Activated naive CD4-positive, alpha-beta T cell treated with anti-CD3 and anti-CD28 coated beads for 36 hours (primary cell): ENCODE measurements at regions of chr7 and their contacts with region 1.

Region 1: GRCh38 chr7:56074371-56074791 is 10.3 kb downstream of the SUMF2 start:
- DNase-seq: peak; percentile 72
- H3K4me3 Mint-ChIP-seq: no peak overlapping the region
- H3K27ac Mint-ChIP-seq: peak overlapping the region; percentile 3
- H3K4me1 Mint-ChIP-seq: peaks cover 6% of the 10 kb centered on the region
- H3K27me3 Mint-ChIP-seq: no peaks in the 10 kb centered on the region

Region 2: GRCh38 chr7:56007167-56007652 is 67.2 kb before region 1 on chr7:
- CTCF ChIA-PET with region 1: interaction called, 19 read pairs
- intact Hi-C with region 1: loop called (anchors 1 kb)
- DNase-seq: no peak
- H3K4me3 Mint-ChIP-seq: no peak overlapping the region
- H3K27ac Mint-ChIP-seq: no peak overlapping the region
- H3K4me1 Mint-ChIP-seq: no peaks in the 10 kb centered on the region
- H3K27me3 Mint-ChIP-seq: no peaks in the 10 kb centered on the region

Region 3: GRCh38 chr7:56063882-56064625 is 10.3 kb before region 1 on chr7 and contains the start of gene SUMF2:
- CTCF ChIA-PET with region 1: interaction called, 12 read pairs
- intact Hi-C with region 1: no loop called
- DNase-seq: peak; percentile 90
- H3K4me3 Mint-ChIP-seq: peak within 1 kb of the TSS; percentile 88
- H3K27ac Mint-ChIP-seq: peak within 1 kb of the TSS; percentile 91
- H3K4me1 Mint-ChIP-seq: peaks cover 41% of the 10 kb centered on the region
- H3K27me3 Mint-ChIP-seq: no peaks in the 10 kb centered on the region
- total RNA-seq, gene SUMF2: 143 to 159 TPM